ENCODE measurements at regions of chr17 and their contacts with region 1.

Region 1: GRCh38 chr17:39636927-39637736 is at the start of gene STARD3:
- DNase-seq: peak; percentile 93
- H3K4me3 ChIP-seq: peak within 1 kb of the TSS; percentile 77
- H3K27ac ChIP-seq: peak within 1 kb of the TSS; percentile 53
- H3K4me1 ChIP-seq: peaks cover 34% of the 10 kb centered on the region
- CTCF ChIP-seq: no peak
- total RNA-seq, gene STARD3: 33.7 and 36.5 TPM in 2 replicates

Region 2: DNA sequence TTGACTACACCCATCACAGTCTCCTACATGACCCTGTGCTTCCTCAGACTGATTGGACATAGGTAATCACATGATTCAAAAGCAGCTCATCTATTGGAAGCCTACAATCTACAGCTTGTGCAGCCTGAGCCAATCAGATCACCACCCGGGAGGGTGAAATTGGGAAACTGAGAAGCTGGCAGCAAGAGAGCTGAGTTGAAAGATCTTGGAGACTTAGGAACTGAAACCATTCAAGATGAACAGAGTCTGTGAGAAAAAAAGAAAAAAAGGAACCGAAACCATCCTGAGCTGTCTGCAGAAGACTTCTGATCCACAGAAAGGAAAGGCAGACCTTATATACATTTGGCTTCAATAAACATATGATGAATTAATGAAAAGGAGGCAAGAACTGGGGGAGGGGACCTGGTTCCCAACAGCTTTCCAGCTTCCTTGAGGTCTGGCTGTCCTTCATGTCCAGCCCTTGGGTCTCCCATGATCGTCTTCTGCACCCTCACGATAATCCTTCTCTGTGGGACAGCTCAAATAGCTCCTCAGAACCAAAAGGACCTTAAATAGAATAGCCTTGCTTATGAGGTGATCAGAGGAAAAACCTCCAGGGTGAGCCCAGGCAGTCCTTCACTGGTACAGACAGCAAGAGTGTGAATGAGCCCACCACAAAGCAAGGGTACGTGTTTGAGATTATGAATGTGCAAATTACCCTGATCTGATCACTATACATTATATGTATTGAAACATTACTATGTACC is 518.3 kb before region 1 on chr17:
- CTCF ChIA-PET with region 1: no interaction called
- POLR2A ChIA-PET with region 1: no interaction called
- intact Hi-C with region 1: no loop called
- DNase-seq: peak; percentile 93
- H3K4me3 ChIP-seq: peak overlapping the region; percentile 14
- H3K27ac ChIP-seq: peak overlapping the region; percentile 42
- H3K4me1 ChIP-seq: peaks cover 23% of the 10 kb centered on the region
- CTCF ChIP-seq: no peak

Region 3: GRCh38 chr17:39410279-39410678 is 226.9 kb before region 1 on chr17:
- CTCF ChIA-PET with region 1: no interaction called
- POLR2A ChIA-PET with region 1: no interaction called
- intact Hi-C with region 1: no loop called
- DNase-seq: no peak
- H3K4me3 ChIP-seq: no peak overlapping the region
- H3K27ac ChIP-seq: no peak overlapping the region
- H3K4me1 ChIP-seq: no peaks in the 10 kb centered on the region
- CTCF ChIP-seq: no peak

Region 4: DNA sequence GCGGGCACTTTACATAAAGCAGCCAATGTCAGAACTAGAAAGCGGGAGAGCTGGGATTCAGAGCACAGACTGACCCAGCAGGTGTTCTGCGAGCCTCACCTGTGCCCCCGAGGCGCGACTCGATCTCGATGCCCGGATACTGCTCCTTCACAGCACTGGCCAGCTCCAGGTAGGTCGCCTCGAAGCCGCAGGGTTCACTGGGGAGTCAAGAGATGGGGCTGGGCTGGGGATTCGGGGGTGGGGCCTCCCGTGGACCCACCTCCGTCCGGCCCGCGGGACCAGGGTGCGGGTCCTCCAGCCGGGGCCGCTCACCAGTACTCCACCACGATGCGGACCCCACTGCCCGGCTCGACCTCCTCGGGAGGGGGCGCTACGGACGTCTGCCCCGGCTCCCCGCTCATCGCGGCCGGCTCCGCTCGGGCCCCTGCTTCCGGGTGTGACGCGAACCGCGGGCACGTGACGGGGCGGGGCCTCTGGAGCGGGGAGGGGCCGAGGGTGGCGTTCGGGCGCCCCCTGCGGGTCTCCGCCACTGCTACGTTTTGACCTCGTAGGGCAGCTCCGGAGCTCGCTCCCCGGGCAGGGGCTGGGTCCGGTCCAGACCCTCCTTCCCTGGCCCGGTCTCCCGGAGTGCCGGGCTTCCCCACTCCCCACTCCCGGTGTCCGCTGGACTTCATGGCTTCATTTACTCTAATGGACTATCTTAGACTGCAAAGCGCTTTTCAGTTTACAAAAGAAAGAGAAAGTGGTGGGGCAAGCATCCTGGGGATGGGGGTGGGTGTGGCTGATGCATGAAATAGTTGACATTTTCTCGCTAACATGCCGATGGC is 93.2 kb after region 1 on chr17 and contains the start of gene MIEN1:
- CTCF ChIA-PET with region 1: interaction called, 10 read pairs
- POLR2A ChIA-PET with region 1: interaction called, 4 read pairs
- intact Hi-C with region 1: no loop called
- DNase-seq: peak; percentile 91
- H3K4me3 ChIP-seq: peak within 1 kb of the TSS; percentile 75
- H3K27ac ChIP-seq: peak within 1 kb of the TSS; percentile 36
- H3K4me1 ChIP-seq: peaks cover 9% of the 10 kb centered on the region
- CTCF ChIP-seq: peak; percentile 90
- total RNA-seq, gene MIEN1: 77.3 and 89.9 TPM in 2 replicates